ENCODE measurements at regions of chr2 and their contacts with region 1.

Region 1: GRCh38 chr2:109128048-109128465 is 948 bp upstream of the SH3RF3 start:
- DNase-seq: no peak
- H3K4me3 ChIP-seq: peak overlapping the region; percentile 69
- H3K27me3 ChIP-seq: peaks cover under 1% of the 10 kb centered on the region
- CTCF ChIP-seq: peak; percentile 87

Region 2: GRCh38 chr2:109177641-109178040 is 49.6 kb after region 1 on chr2:
- CTCF ChIA-PET with region 1: no interaction called
- POLR2A ChIA-PET with region 1: no interaction called
- DNase-seq: no peak
- H3K4me3 ChIP-seq: no peak overlapping the region
- H3K27me3 ChIP-seq: no peaks in the 10 kb centered on the region
- CTCF ChIP-seq: no peak

Region 3: GRCh38 chr2:109331896-109332848 is 204.1 kb after region 1 on chr2:
- CTCF ChIA-PET with region 1: interaction called, 3 read pairs
- POLR2A ChIA-PET with region 1: interaction called, 11 read pairs
- DNase-seq: peak; percentile 82
- H3K4me3 ChIP-seq: no peak overlapping the region
- H3K27me3 ChIP-seq: no peaks in the 10 kb centered on the region
- CTCF ChIP-seq: no peak